ENCODE measurements at regions of chr16 and their contacts with region 1.

Region 1: DNA sequence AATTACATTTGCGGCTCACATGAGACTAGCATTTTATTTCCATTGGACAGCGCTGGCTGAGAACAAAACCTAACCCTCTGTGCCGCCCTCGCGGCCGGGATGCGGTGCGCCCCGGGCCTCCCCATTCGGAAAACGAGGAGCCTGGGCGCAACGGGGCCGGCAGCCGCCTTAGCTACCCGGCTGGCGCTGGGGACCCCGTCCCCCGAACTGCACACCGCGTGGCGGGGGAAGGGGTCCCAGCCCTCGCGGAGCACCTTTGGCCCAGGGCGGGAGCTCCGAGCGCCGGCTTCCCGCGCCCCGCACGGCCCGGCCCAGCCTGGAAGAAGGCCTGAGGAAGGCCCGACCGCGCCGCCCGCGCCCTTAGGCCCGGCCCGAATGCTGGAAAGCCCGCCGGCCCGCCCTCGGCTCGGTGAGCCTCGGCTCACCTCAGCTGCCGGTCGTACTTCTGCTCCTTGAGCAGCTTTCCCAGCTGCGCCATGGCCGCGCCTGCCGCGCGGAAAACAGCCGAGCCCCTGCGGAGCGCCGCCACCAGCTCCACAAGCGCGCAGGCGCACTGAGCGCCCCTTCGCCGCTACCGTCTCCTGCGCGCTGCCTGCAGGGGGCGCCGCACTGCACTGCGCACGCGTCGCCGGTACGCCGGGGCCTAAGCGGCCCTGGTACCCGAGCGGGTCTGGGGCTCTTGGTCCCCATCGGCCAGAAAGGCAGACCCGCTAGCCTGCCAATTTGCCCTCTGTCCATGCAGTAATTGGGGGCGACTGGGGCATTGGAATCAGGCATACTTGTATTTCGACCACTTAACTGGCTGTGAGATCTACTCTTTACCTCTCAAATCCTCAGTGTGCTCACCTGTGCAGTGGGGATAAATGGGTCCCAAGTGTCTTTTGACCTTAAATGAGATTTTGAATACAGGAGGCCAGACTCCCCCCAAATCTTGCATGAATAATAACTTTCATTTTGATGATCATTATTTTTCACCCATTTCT is at the start of gene NAE1:
- DNase-seq: peak; percentile 98
- H3K4me3 ChIP-seq: peak within 1 kb of the TSS; percentile 67 to 73
- H3K27ac ChIP-seq: peak within 1 kb of the TSS; percentile 64 to 81
- H3K4me1 ChIP-seq: peaks cover 4 to 7% of the 10 kb centered on the region in 2 experiments; a peak in 2 of 4 replicates
- H3K27me3 ChIP-seq: no peaks in the 10 kb centered on the region
- CTCF ChIP-seq: peak; percentile 86
- EP300 ChIP-seq: peak in 1 of 2 experiments; percentile 10; a peak in 1 of 4 replicates
- RAD21 ChIP-seq: peak; percentile 36; the same call in 1 of the 2 replicates
- polyA plus RNA-seq, gene NAE1: 33.8 and 45.5 TPM in 2 replicates

Region 2: GRCh38 chr16:66728117-66728787 is 102.5 kb before region 1 on chr16:
- CTCF ChIA-PET with region 1: interaction called, 13 read pairs
- POLR2A ChIA-PET with region 1: no interaction called
- DNase-seq: peak; percentile 59
- H3K4me3 ChIP-seq: no peak overlapping the region
- H3K27ac ChIP-seq: peak overlapping the region in 1 of 2 experiments; percentile 30; a peak in 1 of 4 replicates
- H3K4me1 ChIP-seq: no peaks in the 10 kb centered on the region
- H3K27me3 ChIP-seq: no peaks in the 10 kb centered on the region
- CTCF ChIP-seq: peak; percentile 75
- EP300 ChIP-seq: no peak
- RAD21 ChIP-seq: peak; percentile 63

Region 3: GRCh38 chr16:66751303-66751991 is 79.3 kb before region 1 on chr16 and contains the start of gene DYNC1LI2:
- CTCF ChIA-PET with region 1: interaction called, 10 read pairs
- POLR2A ChIA-PET with region 1: interaction called, 3 read pairs
- DNase-seq: peak; percentile 98
- H3K4me3 ChIP-seq: peak within 1 kb of the TSS; percentile 87 to 91
- H3K27ac ChIP-seq: peak within 1 kb of the TSS; percentile 75 to 92
- H3K4me1 ChIP-seq: peaks cover 15 to 17% of the 10 kb centered on the region in 2 experiments; a peak in 2 of 4 replicates
- H3K27me3 ChIP-seq: no peaks in the 10 kb centered on the region
- CTCF ChIP-seq: peak; percentile 65
- EP300 ChIP-seq: 0 out of 4 replicates have a peak, but pooled peaks of 1 of the 2 experiments have one; percentile 6
- RAD21 ChIP-seq: peak; percentile 40; the same call in 1 of the 2 replicates
- polyA plus RNA-seq, gene DYNC1LI2: 33.1 and 49.6 TPM in 2 replicates

Region 4: GRCh38 chr16:66844342-66845079 is 13.8 kb after region 1 on chr16 and contains the start of gene CA7:
- CTCF ChIA-PET with region 1: interaction called, 82 read pairs
- POLR2A ChIA-PET with region 1: interaction called, 3 read pairs
- DNase-seq: peak; percentile 75
- H3K4me3 ChIP-seq: peak within 1 kb of the TSS; percentile 47 to 53
- H3K27ac ChIP-seq: no peak within 1 kb of the TSS
- H3K4me1 ChIP-seq: peaks cover 0 to 8% of the 10 kb centered on the region in 2 experiments; a peak in 1 of 4 replicates
- H3K27me3 ChIP-seq: peaks cover 15% of the 10 kb centered on the region; the same call in 1 of the 2 replicates
- CTCF ChIP-seq: no peak
- EP300 ChIP-seq: no peak
- RAD21 ChIP-seq: no peak
- polyA plus RNA-seq, gene CA7: 0.11 and 0.12 TPM in 2 replicates

Region 5: DNA sequence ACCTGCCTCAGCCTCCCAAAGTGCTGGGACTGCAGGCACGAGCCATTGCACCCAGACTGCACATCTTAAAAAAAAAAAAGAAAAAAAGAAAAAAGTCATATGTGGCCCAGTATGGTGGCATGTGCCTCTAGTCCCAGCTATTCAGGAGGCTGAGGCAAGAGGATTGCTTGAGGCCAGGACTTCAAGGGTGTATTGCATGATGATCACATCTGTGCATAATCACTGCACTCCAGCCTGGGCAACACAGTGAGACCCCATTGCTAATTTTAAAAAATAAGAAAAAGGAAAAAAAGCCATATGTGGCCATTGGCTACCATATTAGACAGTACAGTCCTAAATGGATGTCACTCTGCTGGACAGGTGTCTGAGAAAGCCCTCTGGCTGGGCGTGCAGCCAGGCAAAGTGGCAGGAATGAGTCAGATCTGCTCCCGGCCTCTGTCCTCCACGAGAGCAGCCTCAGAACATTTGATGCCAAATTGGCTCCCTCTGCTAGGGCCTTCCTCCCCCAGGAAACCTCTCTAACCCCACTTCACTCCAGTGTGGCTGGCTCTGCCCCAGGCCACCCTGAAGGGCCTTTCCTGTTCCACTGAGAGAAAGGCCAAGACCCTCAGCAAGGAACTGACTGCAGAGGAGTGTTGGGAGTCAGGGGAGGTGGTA is 28.2 kb after region 1 on chr16:
- CTCF ChIA-PET with region 1: interaction called, 26 read pairs
- POLR2A ChIA-PET with region 1: no interaction called
- DNase-seq: peak; percentile 19
- H3K4me3 ChIP-seq: no peak overlapping the region
- H3K27ac ChIP-seq: no peak overlapping the region; a peak in 1 of 4 replicates
- H3K4me1 ChIP-seq: peaks cover 7 to 12% of the 10 kb centered on the region in 2 experiments; a peak in 2 of 4 replicates
- H3K27me3 ChIP-seq: no peaks in the 10 kb centered on the region
- CTCF ChIP-seq: no peak
- EP300 ChIP-seq: no peak
- RAD21 ChIP-seq: no peak

Region 6: DNA sequence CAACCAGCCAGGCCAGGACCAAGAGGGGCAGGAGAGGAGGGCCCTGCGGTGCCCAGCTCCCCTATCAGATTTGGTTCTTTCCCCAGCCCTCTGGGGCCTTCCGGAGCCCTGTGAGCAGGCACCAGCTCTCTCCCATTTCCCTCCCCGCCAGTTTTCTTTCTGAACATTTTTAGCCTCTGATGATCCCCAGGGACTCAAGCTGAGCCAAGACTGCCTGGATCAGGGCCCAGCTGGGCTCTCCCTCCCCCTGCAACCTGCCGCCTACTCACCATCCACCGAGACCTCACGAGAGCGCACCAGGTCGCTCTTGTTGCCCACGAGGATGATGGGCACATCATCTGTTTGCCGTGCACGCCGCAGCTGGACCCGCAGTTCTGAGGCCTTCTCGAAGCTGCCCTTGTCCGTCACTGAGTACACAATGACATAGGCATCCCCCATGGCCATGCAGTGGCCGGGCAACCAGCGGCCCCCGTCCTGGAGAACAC is 92.6 kb after region 1 on chr16:
- CTCF ChIA-PET with region 1: no interaction called
- POLR2A ChIA-PET with region 1: no interaction called
- DNase-seq: no peak
- H3K4me3 ChIP-seq: no peak overlapping the region
- H3K27ac ChIP-seq: no peak overlapping the region
- H3K4me1 ChIP-seq: peaks cover 2 to 11% of the 10 kb centered on the region in 2 experiments; a peak in 3 of 4 replicates
- H3K27me3 ChIP-seq: no peaks in the 10 kb centered on the region
- CTCF ChIP-seq: no peak
- EP300 ChIP-seq: no peak
- RAD21 ChIP-seq: no peak

Region 7: GRCh38 chr16:67068212-67068753 is 237.6 kb after region 1 on chr16:
- CTCF ChIA-PET with region 1: no interaction called
- POLR2A ChIA-PET with region 1: no interaction called
- DNase-seq: no peak
- H3K4me3 ChIP-seq: no peak overlapping the region
- H3K27ac ChIP-seq: no peak overlapping the region
- H3K4me1 ChIP-seq: no peaks in the 10 kb centered on the region
- H3K27me3 ChIP-seq: no peaks in the 10 kb centered on the region
- CTCF ChIP-seq: no peak
- EP300 ChIP-seq: no peak
- RAD21 ChIP-seq: no peak

Measured in SK-N-SH (cell line).